ENCODE measurements at regions of chr15 and their contacts with region 1.

Region 1: DNA sequence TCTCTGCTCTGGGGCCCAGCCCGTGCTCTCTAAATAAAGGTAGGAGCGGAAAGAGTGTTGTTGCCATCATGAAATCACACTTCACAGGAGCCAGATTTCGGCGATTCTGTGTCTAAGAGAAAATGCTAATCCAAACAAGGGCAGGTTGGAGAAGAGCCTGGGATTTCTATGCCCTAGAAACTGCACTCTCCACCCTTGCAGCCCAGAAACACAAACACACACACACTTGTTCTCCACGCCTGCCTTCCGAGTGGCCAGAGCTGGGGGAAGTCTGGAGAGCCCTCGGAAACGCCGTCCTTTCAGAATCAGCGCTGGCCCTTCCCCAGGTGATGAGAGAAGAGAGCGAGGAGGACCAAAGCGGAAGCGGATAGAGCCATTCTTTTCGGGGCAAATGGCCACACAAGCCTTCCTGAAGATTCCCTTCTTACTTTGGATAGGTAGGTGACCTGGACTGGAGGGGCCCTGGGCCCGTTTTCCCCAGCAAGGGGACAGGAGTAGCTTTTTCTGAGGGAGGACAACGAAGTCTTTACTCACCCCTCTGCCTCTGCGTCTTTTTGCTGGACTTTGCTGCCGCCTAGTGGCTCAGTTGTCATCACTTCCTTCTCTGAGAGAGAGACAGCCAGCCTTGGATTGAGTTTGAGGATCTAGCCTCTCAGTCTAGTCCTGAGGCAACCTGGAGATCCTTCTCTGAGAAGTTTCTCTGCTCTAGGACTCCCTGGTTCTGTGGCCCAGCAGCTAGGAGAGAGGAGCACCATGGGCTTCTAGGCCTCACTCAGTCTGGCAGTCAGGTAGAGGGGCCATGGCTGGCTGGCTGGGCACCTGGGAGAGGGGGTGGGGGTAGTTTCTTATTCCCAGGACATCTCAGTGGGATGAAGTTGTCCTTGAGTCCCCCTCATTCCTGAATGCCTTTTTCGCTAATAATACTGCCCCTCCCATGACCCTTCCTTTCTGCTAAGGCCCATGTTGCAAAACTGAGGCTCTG is 37.7 kb downstream of the SENP8 start:
- DNase-seq: peak; percentile 29
- H3K4me3 ChIP-seq: peak overlapping the region; percentile 64
- CTCF ChIP-seq: peak; percentile 86

Region 2: GRCh38 chr15:71806452-71806931 is 349.4 kb before region 1 on chr15:
- CTCF ChIA-PET with region 1: interaction called, 25 read pairs
- POLR2A ChIA-PET with region 1: no interaction called
- DNase-seq: no peak
- H3K4me3 ChIP-seq: no peak overlapping the region
- CTCF ChIP-seq: no peak

Region 3: DNA sequence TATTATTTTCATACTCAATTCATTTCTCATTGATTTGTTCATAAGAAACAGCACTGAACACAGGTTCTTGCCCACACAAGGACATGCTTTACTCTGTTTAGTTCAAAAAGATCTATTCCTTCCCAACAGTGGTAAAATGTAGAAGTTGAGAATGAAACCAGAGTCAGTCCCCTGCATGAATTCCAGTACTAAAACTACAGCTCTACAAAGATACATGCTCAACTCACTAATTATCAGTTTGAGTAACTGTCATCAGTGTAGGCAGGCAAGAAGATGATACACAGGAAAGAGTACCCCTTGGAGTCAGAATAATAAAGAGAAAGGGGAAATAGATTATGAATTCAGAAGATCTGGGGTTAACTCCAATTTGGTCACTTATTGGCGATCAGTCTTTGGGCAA is 302.4 kb before region 1 on chr15:
- CTCF ChIA-PET with region 1: interaction called, 12 read pairs
- POLR2A ChIA-PET with region 1: no interaction called
- DNase-seq: no peak
- H3K4me3 ChIP-seq: no peak overlapping the region
- CTCF ChIP-seq: no peak

Region 4: DNA sequence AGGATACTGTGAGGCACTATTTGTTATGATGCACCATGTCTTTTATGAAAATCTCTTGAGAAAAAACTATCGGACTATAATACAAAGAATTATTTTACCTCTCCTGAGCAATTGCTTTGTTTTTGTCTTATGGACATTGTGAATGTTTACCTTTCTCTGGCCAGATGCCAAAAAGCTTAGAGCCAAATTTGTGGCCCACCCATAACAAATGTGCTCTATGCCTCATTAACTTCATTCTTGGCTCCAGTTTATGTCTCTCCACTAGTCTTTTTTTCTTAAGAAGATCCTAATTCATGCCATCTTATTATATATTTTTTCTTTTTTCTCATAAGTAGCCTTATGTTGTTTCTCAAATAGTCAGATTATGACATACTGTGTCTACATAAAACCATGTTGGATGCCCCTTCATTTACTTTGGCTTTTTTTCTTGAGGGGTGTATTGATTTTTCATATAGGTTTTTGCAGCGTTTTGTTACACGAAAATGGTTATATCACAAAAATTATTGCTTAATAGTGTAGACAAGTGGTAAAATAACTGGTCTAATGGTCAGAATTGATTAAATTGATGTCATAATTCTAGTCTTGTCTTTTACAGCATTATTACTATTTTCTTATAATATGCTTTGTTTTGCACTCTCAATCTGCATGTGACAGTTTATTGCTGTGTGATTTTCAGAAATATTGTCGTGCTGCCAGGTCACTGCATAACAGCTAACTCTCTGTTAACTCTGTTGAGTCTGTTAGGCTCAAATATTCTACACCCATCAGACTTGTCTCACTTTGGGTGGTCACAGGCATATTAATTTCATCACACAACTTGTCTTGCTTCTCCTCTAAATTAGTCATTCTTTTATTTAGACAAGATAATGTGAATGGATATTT is 19.5 kb before region 1 on chr15:
- CTCF ChIA-PET with region 1: interaction called, 13 read pairs
- POLR2A ChIA-PET with region 1: no interaction called
- DNase-seq: no peak
- H3K4me3 ChIP-seq: no peak overlapping the region
- CTCF ChIP-seq: no peak

Measured in AG04449 (cell line).